WTC11 (cell line): ENCODE measurements at regions of chr10 and their contacts with region 1.

Region 1: GRCh38 chr10:70558871-70559810 is 43.4 kb downstream of the PRF1 start:
- DNase-seq: peak; percentile 73
- ATAC-seq: peak; percentile 93
- H3K4me3 Mint-ChIP-seq: no peak overlapping the region
- H3K27ac Mint-ChIP-seq: peak overlapping the region; percentile 86
- H3K4me1 Mint-ChIP-seq: peaks cover 21% of the 10 kb centered on the region
- H3K27me3 Mint-ChIP-seq: no peaks in the 10 kb centered on the region
- CTCF ChIP-seq: peak; percentile 59

Region 2: GRCh38 chr10:70584909-70585544 is 25.9 kb after region 1 on chr10:
- CTCF ChIA-PET with region 1: interaction called, 23 read pairs
- POLR2A ChIA-PET with region 1: no interaction called
- DNase-seq: peak; percentile 74
- ATAC-seq: peak; percentile 100
- H3K4me3 Mint-ChIP-seq: no peak overlapping the region
- H3K27ac Mint-ChIP-seq: peak overlapping the region; percentile 75
- H3K4me1 Mint-ChIP-seq: peaks cover 25% of the 10 kb centered on the region
- H3K27me3 Mint-ChIP-seq: no peaks in the 10 kb centered on the region; the same call in 1 of the 2 replicates
- CTCF ChIP-seq: no peak

Region 3: GRCh38 chr10:70622981-70623844 is 64.1 kb after region 1 on chr10:
- CTCF ChIA-PET with region 1: interaction called, 28 read pairs
- POLR2A ChIA-PET with region 1: no interaction called
- DNase-seq: no peak
- ATAC-seq: peak; percentile 2; the same call in 1 of the 2 replicates
- H3K4me3 Mint-ChIP-seq: peak overlapping the region; percentile 14; the same call in 1 of the 2 replicates
- H3K27ac Mint-ChIP-seq: peak overlapping the region; percentile 98
- H3K4me1 Mint-ChIP-seq: peaks cover 57% of the 10 kb centered on the region
- H3K27me3 Mint-ChIP-seq: peaks cover 5% of the 10 kb centered on the region; the same call in 1 of the 2 replicates
- CTCF ChIP-seq: no peak

Region 4: GRCh38 chr10:70758757-70759514 is 199.8 kb after region 1 on chr10:
- CTCF ChIA-PET with region 1: interaction called, 19 read pairs
- POLR2A ChIA-PET with region 1: no interaction called
- DNase-seq: peak; percentile 84
- ATAC-seq: peak; percentile 68
- H3K4me3 Mint-ChIP-seq: no peak overlapping the region
- H3K27ac Mint-ChIP-seq: no peak overlapping the region
- H3K4me1 Mint-ChIP-seq: peaks cover 33% of the 10 kb centered on the region
- H3K27me3 Mint-ChIP-seq: no peaks in the 10 kb centered on the region
- CTCF ChIP-seq: peak; percentile 46; the same call in 1 of the 2 replicates